A673 (cell line): ENCODE measurements at regions of chr19 and their contacts with region 1.

Region 1: DNA sequence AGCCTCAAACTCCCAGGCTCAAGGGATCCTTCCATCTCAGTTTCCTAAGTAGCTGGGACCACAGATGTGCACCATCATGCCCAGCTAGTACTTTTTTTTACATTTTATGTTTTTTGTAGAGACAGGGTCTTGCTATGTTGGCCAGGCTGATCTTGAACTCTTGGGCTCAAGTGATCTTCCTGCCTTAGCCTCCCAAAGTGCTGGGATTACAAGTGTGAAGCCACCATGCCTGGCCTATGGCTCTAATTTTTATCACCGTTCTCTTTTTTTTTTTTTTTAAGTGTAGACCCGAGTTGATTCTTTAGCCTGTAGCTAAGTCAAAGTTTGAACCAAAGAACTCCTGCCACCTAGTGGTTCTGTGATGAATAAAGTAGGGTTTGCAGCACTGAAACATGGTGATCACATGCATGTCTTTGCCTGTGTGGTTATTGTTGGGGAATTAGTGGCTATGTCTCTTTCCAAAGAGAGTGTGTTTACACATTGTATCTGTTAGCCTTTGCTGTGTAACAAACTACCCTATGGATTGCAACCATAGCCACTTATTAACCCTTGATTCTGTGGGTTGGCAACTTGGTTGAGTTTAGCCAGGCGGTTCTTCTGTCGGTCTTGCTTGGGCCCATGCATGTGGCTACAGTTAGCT is 11.6 kb downstream of the NFILZ start:
- DNase-seq: peak; percentile 76
- H3K4me3 ChIP-seq: no peak overlapping the region
- H3K27ac ChIP-seq: no peak overlapping the region
- H3K4me1 ChIP-seq: peaks cover 24% of the 10 kb centered on the region
- H3K27me3 ChIP-seq: no peaks in the 10 kb centered on the region
- CTCF ChIP-seq: peak; percentile 76

Region 2: DNA sequence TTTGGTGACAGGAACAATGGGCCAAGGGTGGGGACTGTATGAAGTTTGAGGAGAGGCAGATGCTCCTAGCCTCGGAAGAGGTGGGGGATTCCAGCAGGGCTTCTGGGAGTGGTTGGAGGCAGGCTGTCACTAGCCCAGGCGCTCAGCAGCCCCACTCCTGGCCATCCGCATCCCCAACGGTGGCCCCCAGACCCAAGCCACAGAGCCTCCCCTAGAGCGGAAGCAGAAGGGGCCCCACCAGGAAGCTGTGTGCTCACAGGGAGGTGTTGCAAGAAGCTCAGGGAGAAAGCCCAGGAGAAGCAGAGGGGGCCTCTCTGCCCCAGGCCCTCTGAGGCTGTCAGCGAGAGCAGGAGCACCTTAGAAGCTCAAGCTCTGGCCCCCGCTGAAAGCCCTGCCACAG is 147.9 kb before region 1 on chr19:
- CTCF ChIA-PET with region 1: no interaction called
- POLR2A ChIA-PET with region 1: no interaction called
- intact Hi-C with region 1: no loop called
- DNase-seq: no peak
- H3K4me3 ChIP-seq: no peak overlapping the region
- H3K27ac ChIP-seq: no peak overlapping the region
- H3K4me1 ChIP-seq: no peaks in the 10 kb centered on the region
- H3K27me3 ChIP-seq: no peaks in the 10 kb centered on the region
- CTCF ChIP-seq: no peak

Region 3: DNA sequence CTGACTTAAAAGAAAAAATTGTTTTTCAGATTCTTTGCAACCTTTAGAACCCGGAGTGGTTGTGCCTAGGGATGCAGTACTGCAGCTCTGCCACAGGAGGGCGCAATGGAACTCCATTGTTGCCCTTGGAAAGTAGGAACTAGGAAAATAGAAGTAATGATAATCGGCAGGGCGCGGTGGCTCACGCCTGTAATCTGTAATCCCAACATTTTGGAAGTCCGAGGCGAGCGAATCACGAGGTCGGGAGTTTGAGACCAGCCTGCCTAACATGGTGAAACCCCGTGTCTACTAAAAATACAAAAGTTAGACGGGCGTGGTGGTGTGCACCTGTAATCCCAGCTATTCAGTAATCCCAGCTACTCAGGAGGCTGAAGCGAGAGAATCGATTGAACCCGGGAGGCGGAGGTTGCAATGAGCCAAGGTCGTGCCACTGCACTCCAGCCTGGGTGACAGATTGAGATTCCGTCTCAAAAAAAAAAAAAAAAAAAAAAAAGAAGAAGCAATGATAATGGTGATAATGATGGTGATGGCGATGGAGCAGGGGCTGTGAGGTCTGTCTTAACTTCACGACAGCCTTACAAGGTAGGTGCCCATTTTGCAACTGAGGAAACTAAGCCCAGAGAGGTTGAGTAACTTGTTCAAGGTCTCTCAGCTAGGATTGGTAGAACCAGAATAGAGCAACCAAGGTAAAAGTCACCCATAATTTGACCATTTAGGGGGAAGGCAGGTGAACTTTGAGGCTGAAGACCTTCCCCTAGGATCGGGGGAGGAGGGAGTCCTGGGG is 26.0 kb before region 1 on chr19:
- CTCF ChIA-PET with region 1: interaction called, 12 read pairs
- POLR2A ChIA-PET with region 1: no interaction called
- intact Hi-C with region 1: no loop called
- DNase-seq: peak; percentile 81
- H3K4me3 ChIP-seq: no peak overlapping the region
- H3K27ac ChIP-seq: no peak overlapping the region
- H3K4me1 ChIP-seq: peaks cover 10% of the 10 kb centered on the region
- H3K27me3 ChIP-seq: no peaks in the 10 kb centered on the region
- CTCF ChIP-seq: peak; percentile 97

Region 4: GRCh38 chr19:8631425-8631819 is 10.6 kb before region 1 on chr19:
- CTCF ChIA-PET with region 1: interaction called, 15 read pairs
- POLR2A ChIA-PET with region 1: no interaction called
- intact Hi-C with region 1: no loop called
- DNase-seq: peak; percentile 86
- H3K4me3 ChIP-seq: no peak overlapping the region
- H3K27ac ChIP-seq: peak overlapping the region; percentile 64
- H3K4me1 ChIP-seq: peaks cover 29% of the 10 kb centered on the region
- H3K27me3 ChIP-seq: no peaks in the 10 kb centered on the region
- CTCF ChIP-seq: no peak